Activated CD8-positive, alpha-beta memory T cell treated with anti-CD3 and anti-CD28 coated beads, Interleukin-2, amount 10 ng/mL, durations not matched to agents 7 days and 5 days (primary cell): ENCODE measurements at regions of chr17 and their contacts with region 1.

Region 1: DNA sequence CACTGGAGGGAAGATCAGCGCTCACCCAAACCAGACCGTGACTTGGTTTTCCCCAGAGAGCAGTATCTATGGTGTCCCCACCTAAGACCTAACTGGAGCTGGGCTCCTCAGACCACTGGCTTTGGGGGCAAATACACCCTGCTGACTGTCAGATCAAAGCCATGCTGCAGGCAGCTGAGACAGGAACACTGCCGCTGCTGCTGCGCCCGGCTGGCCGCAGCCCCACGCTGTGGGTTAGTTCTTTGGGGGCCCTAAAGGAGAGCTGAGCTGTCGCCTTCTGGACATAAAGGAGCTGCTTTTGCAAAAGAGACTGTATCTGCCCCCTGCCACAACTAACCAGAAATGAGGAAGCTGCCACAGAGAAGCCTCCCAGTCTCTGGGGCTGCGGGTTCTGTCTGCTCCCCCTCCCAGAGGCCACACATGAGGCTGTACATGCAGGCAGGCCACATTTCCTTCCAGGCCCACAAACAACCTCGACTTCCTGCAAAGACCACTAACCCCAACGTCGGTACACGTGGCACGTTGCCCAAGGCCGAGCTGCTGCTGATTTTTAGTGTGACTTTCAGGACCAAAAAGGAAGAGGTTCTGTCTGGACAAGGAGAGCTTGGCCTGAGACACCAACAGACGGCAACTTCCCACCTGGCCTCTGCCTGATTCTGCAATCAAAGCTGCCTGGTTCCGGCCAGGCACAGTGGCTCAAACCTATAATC is 18.2 kb upstream of the ABR start:
- DNase-seq: peak; percentile 96
- ATAC-seq: peak; percentile 67
- H3K4me3 Mint-ChIP-seq: peak overlapping the region; percentile 52
- H3K27ac Mint-ChIP-seq: peak overlapping the region; percentile 91
- H3K4me1 Mint-ChIP-seq: peaks cover 65% of the 10 kb centered on the region
- H3K27me3 Mint-ChIP-seq: peaks cover 3% of the 10 kb centered on the region

Region 2: GRCh38 chr17:1055751-1056645 is 141.9 kb before region 1 on chr17:
- CTCF ChIA-PET with region 1: interaction called, 15 read pairs
- DNase-seq: peak; percentile 64
- ATAC-seq: peak; percentile 65
- H3K4me3 Mint-ChIP-seq: no peak overlapping the region
- H3K27ac Mint-ChIP-seq: no peak overlapping the region
- H3K4me1 Mint-ChIP-seq: peaks cover 4% of the 10 kb centered on the region
- H3K27me3 Mint-ChIP-seq: no peaks in the 10 kb centered on the region

Region 3: GRCh38 chr17:1186923-1187771 is 10.8 kb before region 1 on chr17:
- CTCF ChIA-PET with region 1: interaction called, 110 read pairs
- DNase-seq: peak; percentile 80
- ATAC-seq: peak; percentile 95
- H3K4me3 Mint-ChIP-seq: no peak overlapping the region
- H3K27ac Mint-ChIP-seq: no peak overlapping the region
- H3K4me1 Mint-ChIP-seq: peaks cover 18% of the 10 kb centered on the region
- H3K27me3 Mint-ChIP-seq: peaks cover 17% of the 10 kb centered on the region

Region 4: DNA sequence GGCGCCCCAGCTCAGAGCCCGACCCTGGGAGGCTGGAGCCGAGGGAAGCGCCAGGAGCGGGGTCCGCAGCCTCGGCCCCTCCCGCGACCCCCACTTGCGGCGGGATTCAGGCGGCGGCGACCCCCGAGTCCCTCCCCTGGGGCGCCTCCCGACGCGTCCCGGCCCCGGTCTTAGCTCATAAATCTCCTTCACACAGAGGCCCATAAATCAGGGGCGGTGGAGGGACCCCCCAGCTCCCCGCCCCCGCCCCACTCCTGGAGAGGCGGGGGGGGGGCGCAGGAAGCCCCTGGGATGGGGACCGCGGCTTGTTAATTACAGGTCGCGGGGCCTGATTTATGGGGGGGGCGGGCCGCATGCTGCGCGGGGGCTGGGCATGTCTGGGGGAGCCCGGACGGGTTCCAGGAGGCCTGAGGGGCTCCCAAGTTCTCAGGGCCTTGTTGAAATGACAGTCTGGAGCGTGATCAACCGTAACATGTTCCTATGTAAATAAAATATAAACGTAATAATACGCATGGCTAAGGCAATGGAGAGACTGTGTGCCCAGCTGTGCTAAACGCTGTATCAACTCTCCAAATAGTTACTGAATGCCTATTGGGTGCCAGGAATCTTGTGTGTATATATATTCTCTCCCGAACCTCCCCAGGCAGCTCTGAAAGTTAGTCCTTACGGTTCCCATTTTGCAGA is 62.3 kb after region 1 on chr17:
- CTCF ChIA-PET with region 1: interaction called, 12 read pairs
- DNase-seq: no peak
- ATAC-seq: no peak
- H3K4me3 Mint-ChIP-seq: no peak overlapping the region
- H3K27ac Mint-ChIP-seq: no peak overlapping the region
- H3K4me1 Mint-ChIP-seq: peaks cover 42% of the 10 kb centered on the region
- H3K27me3 Mint-ChIP-seq: peaks cover 26% of the 10 kb centered on the region

Region 5: GRCh38 chr17:1280652-1281051 is 82.7 kb after region 1 on chr17:
- CTCF ChIA-PET with region 1: no interaction called
- DNase-seq: no peak
- ATAC-seq: no peak
- H3K4me3 Mint-ChIP-seq: no peak overlapping the region
- H3K27ac Mint-ChIP-seq: no peak overlapping the region
- H3K4me1 Mint-ChIP-seq: peaks cover 3% of the 10 kb centered on the region
- H3K27me3 Mint-ChIP-seq: peaks cover 3% of the 10 kb centered on the region